ENCODE measurements at regions of chr4 and their contacts with region 1.

Region 1: DNA sequence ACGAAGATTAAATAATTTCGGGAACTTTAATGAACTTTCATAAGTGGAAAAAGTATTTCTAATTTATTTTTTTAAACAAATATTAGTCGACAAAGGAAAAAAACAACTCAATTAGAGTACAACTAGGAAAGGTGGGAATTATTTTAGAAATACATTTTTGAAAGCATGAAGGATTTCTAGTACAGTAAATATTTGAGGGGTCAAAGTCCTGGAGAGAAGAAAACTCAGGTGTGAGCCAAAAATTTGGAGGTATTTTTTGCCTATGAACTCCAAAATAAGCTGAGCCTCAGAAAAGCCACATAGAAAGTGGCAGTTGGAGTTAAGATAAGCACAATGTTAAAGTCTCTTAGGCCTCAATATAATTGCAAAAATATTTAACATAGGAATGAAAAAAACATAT is 2017.3 kb downstream of the C4orf33 start:
- DNase-seq: no peak
- H3K4me3 ChIP-seq: no peak overlapping the region
- H3K27ac ChIP-seq: no peak overlapping the region
- H3K4me1 ChIP-seq: no peaks in the 10 kb centered on the region
- H3K27me3 ChIP-seq: no peaks in the 10 kb centered on the region
- CTCF ChIP-seq: no peak

Region 2: GRCh38 chr4:129561886-129562285 is 1551.4 kb before region 1 on chr4:
- CTCF ChIA-PET with region 1: interaction called, 13 read pairs
- dilution Hi-C with region 1: no loop called
- in situ Hi-C with region 1: no loop called
- intact Hi-C with region 1: no loop called
- DNase-seq: no peak
- H3K4me3 ChIP-seq: no peak overlapping the region
- H3K27ac ChIP-seq: no peak overlapping the region
- H3K4me1 ChIP-seq: no peaks in the 10 kb centered on the region
- H3K27me3 ChIP-seq: no peaks in the 10 kb centered on the region
- CTCF ChIP-seq: no peak

Measured in mammary epithelial cell (primary cell).